Endothelial cell of umbilical vein (primary cell): ENCODE measurements at regions of chr3 and their contacts with region 1.

Region 1: DNA sequence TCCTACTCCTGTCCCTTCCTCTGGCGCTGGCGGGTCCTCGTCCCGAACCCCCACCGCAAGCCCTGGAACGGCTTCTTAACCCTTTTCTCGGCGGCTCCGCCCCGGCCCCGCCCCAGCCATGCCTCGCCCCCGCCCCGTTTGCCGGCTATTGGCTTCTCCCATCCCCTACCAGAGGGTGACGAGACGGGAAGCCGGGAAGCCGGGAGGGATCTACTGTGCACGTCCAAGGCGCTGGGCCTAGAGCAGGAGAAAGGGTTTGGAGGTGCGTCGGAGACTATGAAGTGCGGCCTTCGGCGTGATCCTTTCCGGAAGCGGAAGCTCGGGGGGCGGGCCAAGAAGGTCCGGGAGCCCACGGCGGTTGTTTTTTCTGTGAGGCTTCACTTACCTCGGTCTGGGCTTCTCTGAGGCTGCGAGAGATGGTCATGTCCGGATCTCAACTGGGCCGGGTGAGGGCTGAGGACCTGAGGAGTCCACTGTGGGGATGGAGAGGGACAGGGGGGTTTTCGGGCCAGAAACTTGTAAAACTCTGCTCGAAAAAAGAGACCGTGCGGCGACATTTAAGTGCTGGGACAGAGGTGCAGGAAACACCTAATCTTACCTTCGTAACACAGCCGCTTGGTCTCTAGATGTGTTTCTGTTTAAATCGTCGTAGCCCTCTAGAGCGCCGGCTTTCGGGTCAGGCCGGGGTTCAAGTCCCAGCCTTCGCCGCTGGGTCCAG is 21.4 kb downstream of the ROPN1B start:
- DNase-seq: peak; percentile 63
- H3K4me3 ChIP-seq: peak overlapping the region; percentile 14 to 93 (median 67)
- H3K27ac ChIP-seq: no peak overlapping the region
- H3K4me1 ChIP-seq: peaks cover 8% of the 10 kb centered on the region
- H3K27me3 ChIP-seq: peaks cover 9 to 11% of the 10 kb centered on the region in 2 experiments
- CTCF ChIP-seq: no peak
- POLR2A ChIP-seq: peak; percentile 45

Region 2: GRCh38 chr3:126040386-126040785 is 50.0 kb after region 1 on chr3:
- CTCF ChIA-PET with region 1: no interaction called
- POLR2A ChIA-PET with region 1: interaction called, 11 read pairs
- dilution Hi-C with region 1: no loop called
- intact Hi-C with region 1: no loop called
- DNase-seq: no peak
- H3K4me3 ChIP-seq: no peak overlapping the region
- H3K27ac ChIP-seq: no peak overlapping the region
- H3K4me1 ChIP-seq: no peaks in the 10 kb centered on the region
- H3K27me3 ChIP-seq: no peaks in the 10 kb centered on the region
- CTCF ChIP-seq: no peak
- POLR2A ChIP-seq: no peak

Region 3: GRCh38 chr3:126083913-126084767 is 93.7 kb after region 1 on chr3 and contains the start of gene SLC41A3:
- CTCF ChIA-PET with region 1: no interaction called
- POLR2A ChIA-PET with region 1: no interaction called
- dilution Hi-C with region 1: no loop called
- intact Hi-C with region 1: loop called (anchors 5 kb)
- DNase-seq: peak; percentile 74
- H3K4me3 ChIP-seq: peak within 1 kb of the TSS; percentile 65 to 82 (median 71)
- H3K27ac ChIP-seq: peak within 1 kb of the TSS; percentile 41
- H3K4me1 ChIP-seq: peaks cover 5% of the 10 kb centered on the region
- H3K27me3 ChIP-seq: peaks cover 2 to 3% of the 10 kb centered on the region in 2 experiments
- CTCF ChIP-seq: peak; percentile 18 to 58
- POLR2A ChIP-seq: no peak
- total RNA-seq, gene SLC41A3: 47.1 and 52.5 TPM in 2 replicates